IMR-90 (cell line): ENCODE measurements at regions of chr2 and their contacts with region 1.

Region 1: GRCh38 chr2:196468394-196468793 is 171.1 kb upstream of the CCDC150 start:
- DNase-seq: no peak
- ATAC-seq: no peak
- H3K4me3 ChIP-seq: no peak overlapping the region
- H3K27ac ChIP-seq: no peak overlapping the region
- H3K4me1 ChIP-seq: no peaks in the 10 kb centered on the region
- H3K27me3 ChIP-seq: peaks cover 2% of the 10 kb centered on the region; the same call in 1 of the 2 replicates
- CTCF ChIP-seq: 0 out of 2 replicates have a peak, but pooled peaks have one; percentile 3
- POLR2A ChIP-seq: no peak
- RAD21 ChIP-seq: no peak

Region 2: DNA sequence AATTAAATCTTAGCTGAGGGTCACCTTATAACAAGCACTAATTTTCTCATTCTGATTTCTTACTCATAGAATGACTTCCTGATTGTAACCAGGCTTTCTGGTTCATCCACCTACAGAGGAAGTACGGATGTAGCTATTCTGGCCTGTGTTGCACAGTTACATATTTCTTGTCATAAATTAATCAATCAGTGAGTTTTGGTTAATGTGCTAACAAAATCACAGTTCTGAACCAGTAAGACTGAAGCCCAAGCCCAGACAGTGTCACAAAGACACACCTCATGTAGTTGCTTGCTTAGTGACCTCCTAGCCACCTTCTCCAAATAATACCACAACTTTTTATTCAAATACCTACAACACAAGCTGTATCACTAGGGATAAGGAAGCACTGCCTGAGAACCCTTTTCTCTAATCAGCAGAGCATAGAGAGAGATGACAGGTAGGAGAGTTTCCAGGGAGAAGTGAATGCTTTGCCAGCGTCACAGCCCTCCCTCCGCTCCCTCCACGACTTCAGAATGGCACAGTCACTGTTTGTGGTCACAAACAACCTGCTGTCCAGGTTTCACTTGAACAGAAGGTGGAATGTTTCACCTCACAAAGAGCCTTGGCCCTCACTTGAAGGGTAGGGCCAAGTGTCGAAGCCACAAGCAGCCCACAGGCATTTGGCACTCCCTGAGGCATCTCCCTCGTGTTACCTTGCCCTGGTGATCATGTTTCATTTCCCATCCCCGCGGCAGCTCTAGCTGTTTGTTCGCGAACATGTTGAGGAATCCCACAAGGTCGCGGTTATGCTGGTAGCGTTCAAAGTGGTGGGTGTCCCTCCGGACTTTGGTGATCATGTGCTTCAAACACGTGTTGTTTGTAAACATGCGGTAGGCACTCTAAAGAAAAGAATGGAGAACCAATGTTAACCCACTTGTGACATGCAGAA is 176.3 kb before region 1 on chr2:
- CTCF ChIA-PET with region 1: no interaction called
- POLR2A ChIA-PET with region 1: no interaction called
- dilution Hi-C with region 1: no loop called
- in situ Hi-C with region 1: no loop called
- intact Hi-C with region 1: no loop called
- DNase-seq: no peak
- ATAC-seq: no peak
- H3K4me3 ChIP-seq: no peak overlapping the region
- H3K27ac ChIP-seq: no peak overlapping the region
- H3K4me1 ChIP-seq: peaks cover 11% of the 10 kb centered on the region
- H3K27me3 ChIP-seq: no peaks in the 10 kb centered on the region
- CTCF ChIP-seq: no peak
- POLR2A ChIP-seq: no peak
- RAD21 ChIP-seq: no peak

Region 3: GRCh38 chr2:196453613-196454047 is 14.8 kb before region 1 on chr2:
- CTCF ChIA-PET with region 1: interaction called, 13 read pairs
- POLR2A ChIA-PET with region 1: no interaction called
- dilution Hi-C with region 1: no loop called
- in situ Hi-C with region 1: no loop called
- intact Hi-C with region 1: no loop called
- DNase-seq: peak; percentile 63
- ATAC-seq: peak; percentile 73; the same call in 1 of the 2 replicates
- H3K4me3 ChIP-seq: no peak overlapping the region
- H3K27ac ChIP-seq: no peak overlapping the region
- H3K4me1 ChIP-seq: no peaks in the 10 kb centered on the region
- H3K27me3 ChIP-seq: no peaks in the 10 kb centered on the region
- CTCF ChIP-seq: peak; percentile 69
- POLR2A ChIP-seq: no peak
- RAD21 ChIP-seq: peak; percentile 73